ENCODE measurements at regions of chr6 and their contacts with region 1.

Region 1: DNA sequence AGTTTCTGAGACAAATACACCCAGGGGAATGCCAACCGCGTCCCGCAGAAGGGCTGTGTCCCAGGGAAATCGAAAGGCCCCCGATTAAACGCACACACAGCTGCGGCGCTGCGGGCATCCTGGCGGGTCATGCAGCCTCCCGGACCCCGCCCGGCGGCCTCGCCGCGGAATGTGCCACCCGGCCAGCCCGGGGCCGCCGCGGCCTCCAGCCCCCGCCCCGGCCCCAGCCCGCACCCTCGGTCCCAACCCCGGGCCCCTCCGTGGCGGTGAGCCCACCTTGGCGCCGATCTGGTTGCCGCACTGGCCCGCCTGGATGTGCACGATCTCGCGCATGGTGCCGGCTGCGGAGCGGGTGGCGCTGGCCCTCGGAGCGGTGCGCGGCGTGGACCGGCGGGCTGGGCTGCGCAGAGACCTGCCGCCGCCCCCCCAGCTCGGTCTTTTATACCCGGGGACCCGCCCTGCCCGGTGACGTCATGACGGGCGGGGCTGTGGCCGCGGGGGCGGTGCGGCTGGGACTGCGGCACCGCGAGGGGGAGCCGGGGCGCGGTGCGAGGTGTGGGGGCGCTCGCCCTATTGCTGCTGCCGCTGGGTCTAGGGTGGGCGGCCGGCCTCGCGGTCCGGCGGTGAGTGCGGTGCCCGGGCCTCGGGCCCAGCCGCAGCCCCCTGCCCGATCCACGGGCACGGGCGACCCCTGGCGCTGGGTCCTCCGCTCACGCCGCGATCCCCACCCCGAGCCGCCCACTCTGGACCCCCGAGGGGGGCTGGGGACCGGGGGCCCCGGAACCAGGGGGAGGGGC is at the start of gene TUBB2A:
- DNase-seq: peak; percentile 75 to 92
- H3K4me3 ChIP-seq: peak within 1 kb of the TSS; percentile 61
- H3K4me3 Mint-ChIP-seq: peak within 1 kb of the TSS; percentile 77
- H3K27ac Mint-ChIP-seq: peak within 1 kb of the TSS; percentile 64
- H3K4me1 ChIP-seq: peaks cover 13% of the 10 kb centered on the region; the same call in 1 of the 2 replicates
- H3K4me1 Mint-ChIP-seq: peaks cover 16% of the 10 kb centered on the region
- H3K27me3 ChIP-seq: no peaks in the 10 kb centered on the region
- H3K27me3 Mint-ChIP-seq: no peaks in the 10 kb centered on the region
- CTCF ChIP-seq: peak in 1 of 2 experiments; percentile 33
- total RNA-seq, gene TUBB2A: 89.8 and 90.7 TPM in 2 replicates

Region 2: GRCh38 chr6:3061501-3061941 is 95.8 kb before region 1 on chr6:
- CTCF ChIA-PET with region 1: no interaction called
- POLR2A ChIA-PET with region 1: no interaction called
- intact Hi-C with region 1: no loop called
- DNase-seq: no peak
- H3K4me3 ChIP-seq: no peak overlapping the region
- H3K4me3 Mint-ChIP-seq: no peak overlapping the region
- H3K27ac Mint-ChIP-seq: no peak overlapping the region
- H3K4me1 ChIP-seq: no peaks in the 10 kb centered on the region
- H3K4me1 Mint-ChIP-seq: peaks cover 6% of the 10 kb centered on the region
- H3K27me3 ChIP-seq: no peaks in the 10 kb centered on the region
- H3K27me3 Mint-ChIP-seq: no peaks in the 10 kb centered on the region
- CTCF ChIP-seq: no peak

Region 3: GRCh38 chr6:3139090-3139903 is 18.0 kb before region 1 on chr6:
- CTCF ChIA-PET with region 1: interaction called, 11 read pairs
- POLR2A ChIA-PET with region 1: no interaction called
- intact Hi-C with region 1: loop called (anchors 1 kb)
- DNase-seq: peak; percentile 79 to 85
- H3K4me3 ChIP-seq: no peak overlapping the region
- H3K4me3 Mint-ChIP-seq: peak overlapping the region; percentile 48
- H3K27ac Mint-ChIP-seq: peak overlapping the region; percentile 70
- H3K4me1 ChIP-seq: peaks cover 42% of the 10 kb centered on the region
- H3K4me1 Mint-ChIP-seq: peaks cover 33% of the 10 kb centered on the region
- H3K27me3 ChIP-seq: no peaks in the 10 kb centered on the region
- H3K27me3 Mint-ChIP-seq: no peaks in the 10 kb centered on the region
- CTCF ChIP-seq: no peak

Measured in Caco-2 (cell line).